Activated CD4-positive, alpha-beta T cell treated with anti-CD3 and anti-CD28 coated beads for 36 hours (primary cell): ENCODE measurements at regions of chr6 and their contacts with region 1.

Region 1: DNA sequence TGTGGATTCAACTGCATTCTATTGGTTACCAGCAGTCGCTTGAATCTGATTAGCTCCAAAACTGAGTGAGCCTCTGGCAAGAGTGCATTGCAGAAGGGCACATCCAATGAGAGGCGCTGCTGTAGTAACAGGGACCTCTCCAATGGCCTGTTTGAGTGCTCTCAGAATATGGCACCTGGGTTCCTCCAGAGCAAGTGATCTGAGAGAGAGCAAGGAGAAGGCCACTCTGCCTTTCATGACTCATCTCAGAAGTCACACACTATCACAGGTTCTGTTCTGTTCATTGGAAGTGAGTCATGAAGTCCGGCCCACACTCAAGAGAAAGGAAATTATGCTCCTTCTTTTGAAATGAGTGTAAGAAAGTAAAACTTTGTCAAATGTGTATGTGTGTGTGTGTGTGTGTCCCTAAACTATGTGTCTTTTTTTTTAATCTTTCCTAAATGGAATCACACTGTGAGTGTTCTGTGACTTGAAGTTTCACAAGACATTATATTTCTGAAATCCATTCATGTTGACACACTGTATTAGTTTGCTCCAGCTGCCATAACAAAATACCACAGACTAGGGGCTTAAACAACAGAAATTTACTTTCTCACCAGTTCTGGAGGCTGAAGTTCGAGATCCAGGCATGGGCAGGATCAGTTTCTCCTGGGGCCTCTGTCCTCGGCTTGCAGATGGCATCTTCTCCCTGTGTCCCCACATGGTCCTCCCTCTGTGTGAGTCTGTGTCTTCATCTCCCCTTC is 138.3 kb upstream of the CDYL start:
- DNase-seq: peak; percentile 69
- ATAC-seq: peak; percentile 99
- H3K4me3 Mint-ChIP-seq: no peak overlapping the region
- H3K27ac Mint-ChIP-seq: peak overlapping the region; percentile 78
- H3K4me1 Mint-ChIP-seq: peaks cover 27% of the 10 kb centered on the region
- H3K27me3 Mint-ChIP-seq: peaks cover 33% of the 10 kb centered on the region

Region 2: GRCh38 chr6:4707011-4707410 is 69.1 kb after region 1 on chr6:
- CTCF ChIA-PET with region 1: no interaction called
- POLR2A ChIA-PET with region 1: no interaction called
- intact Hi-C with region 1: no loop called
- DNase-seq: no peak
- ATAC-seq: no peak
- H3K4me3 Mint-ChIP-seq: no peak overlapping the region
- H3K27ac Mint-ChIP-seq: no peak overlapping the region
- H3K4me1 Mint-ChIP-seq: no peaks in the 10 kb centered on the region
- H3K27me3 Mint-ChIP-seq: peaks cover 2% of the 10 kb centered on the region

Region 3: DNA sequence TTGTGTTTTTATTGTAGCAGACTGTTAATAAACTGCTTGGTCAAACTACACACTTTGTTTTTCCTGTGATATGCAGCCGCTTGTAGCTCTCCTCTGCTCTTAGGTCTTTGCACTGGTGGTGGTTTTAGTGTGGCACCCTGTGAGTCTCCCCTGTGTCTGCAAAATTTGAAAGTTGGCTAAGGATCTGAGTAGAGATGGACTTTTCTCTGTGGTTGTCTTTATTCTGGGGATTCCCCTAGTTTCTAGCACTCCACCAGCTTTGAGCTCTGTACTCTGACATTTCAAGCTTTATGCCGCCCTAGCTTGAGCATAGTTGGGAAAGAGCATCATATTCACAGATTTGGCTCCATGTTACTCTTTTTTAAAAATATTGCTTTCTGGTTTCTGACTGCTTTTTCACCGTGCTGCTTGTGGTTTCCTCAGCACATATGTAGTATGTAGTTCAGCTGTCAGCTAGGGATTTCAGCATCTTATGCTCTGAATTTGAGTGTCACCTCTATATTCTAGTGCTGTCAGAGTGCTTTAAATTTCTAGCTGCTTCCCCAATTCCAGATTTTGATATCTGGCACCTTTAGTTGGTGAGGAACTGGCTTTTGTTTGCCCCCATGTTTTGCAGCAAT is 163.7 kb after region 1 on chr6:
- CTCF ChIA-PET with region 1: no interaction called
- POLR2A ChIA-PET with region 1: no interaction called
- intact Hi-C with region 1: loop called in 1 of 2 experiments (anchors 5 kb)
- DNase-seq: peak; percentile 22
- ATAC-seq: peak; percentile 86
- H3K4me3 Mint-ChIP-seq: peak overlapping the region; percentile 16
- H3K27ac Mint-ChIP-seq: no peak overlapping the region
- H3K4me1 Mint-ChIP-seq: peaks cover 72% of the 10 kb centered on the region
- H3K27me3 Mint-ChIP-seq: no peaks in the 10 kb centered on the region

Region 4: DNA sequence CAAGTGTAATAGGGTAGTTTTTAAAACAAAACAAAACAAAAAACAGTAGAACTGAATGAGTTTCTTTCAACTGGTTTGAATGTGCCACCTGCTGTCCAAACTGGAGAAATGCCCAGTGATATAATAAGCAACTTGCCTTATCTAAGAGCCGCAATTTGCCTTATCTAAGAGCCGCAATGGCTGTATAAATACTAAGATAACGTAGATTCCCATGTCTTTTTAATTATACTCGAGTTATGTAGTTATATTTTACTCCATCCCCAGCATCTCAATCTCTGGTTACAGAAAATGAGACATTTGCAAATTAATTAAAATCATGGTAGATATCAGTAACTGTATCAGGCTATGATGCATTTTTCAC is 298.8 kb after region 1 on chr6:
- CTCF ChIA-PET with region 1: no interaction called
- POLR2A ChIA-PET with region 1: no interaction called
- intact Hi-C with region 1: loop called (anchors 2 to 5 kb)
- DNase-seq: no peak
- ATAC-seq: no peak
- H3K4me3 Mint-ChIP-seq: no peak overlapping the region
- H3K27ac Mint-ChIP-seq: no peak overlapping the region
- H3K4me1 Mint-ChIP-seq: peaks cover 55% of the 10 kb centered on the region
- H3K27me3 Mint-ChIP-seq: no peaks in the 10 kb centered on the region

Region 5: GRCh38 chr6:4941782-4942672 is 304.2 kb after region 1 on chr6:
- CTCF ChIA-PET with region 1: no interaction called
- POLR2A ChIA-PET with region 1: no interaction called
- intact Hi-C with region 1: loop called (anchors 1 to 5 kb)
- DNase-seq: peak; percentile 73
- ATAC-seq: peak; percentile 93
- H3K4me3 Mint-ChIP-seq: no peak overlapping the region
- H3K27ac Mint-ChIP-seq: peak overlapping the region; percentile 61
- H3K4me1 Mint-ChIP-seq: peaks cover 47% of the 10 kb centered on the region
- H3K27me3 Mint-ChIP-seq: no peaks in the 10 kb centered on the region

Region 6: DNA sequence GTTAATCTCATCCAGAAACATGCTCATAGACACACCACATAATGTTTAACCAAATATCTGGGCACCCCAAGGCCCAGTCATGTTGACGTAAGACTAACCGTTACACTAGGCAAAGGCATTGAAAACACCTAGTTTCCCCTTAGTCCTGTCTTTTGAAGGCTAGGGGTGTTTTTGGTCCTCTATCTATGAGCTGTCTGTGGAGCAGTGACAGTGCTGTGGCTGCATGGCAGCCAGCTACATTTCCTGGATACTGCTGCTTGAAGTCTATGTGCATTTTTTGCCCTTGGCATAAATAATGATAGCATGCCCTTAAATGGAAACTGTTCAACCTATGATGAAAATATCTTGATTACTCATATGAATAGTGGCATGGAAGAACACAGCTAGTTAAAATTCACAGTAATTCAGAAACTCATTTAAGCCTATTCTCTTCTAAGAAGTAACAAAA is 642.1 kb after region 1 on chr6:
- CTCF ChIA-PET with region 1: no interaction called
- POLR2A ChIA-PET with region 1: no interaction called
- intact Hi-C with region 1: loop called in 1 of 2 experiments (anchors 2 kb)
- DNase-seq: peak; percentile 71
- ATAC-seq: peak; percentile 92
- H3K4me3 Mint-ChIP-seq: peak overlapping the region; percentile 10
- H3K27ac Mint-ChIP-seq: peak overlapping the region; percentile 91
- H3K4me1 Mint-ChIP-seq: peaks cover 43% of the 10 kb centered on the region
- H3K27me3 Mint-ChIP-seq: no peaks in the 10 kb centered on the region